Ascending aorta (tissue), 2 donors: ENCODE measurements at regions of chr6 and their contacts with region 1.

Region 1: DNA sequence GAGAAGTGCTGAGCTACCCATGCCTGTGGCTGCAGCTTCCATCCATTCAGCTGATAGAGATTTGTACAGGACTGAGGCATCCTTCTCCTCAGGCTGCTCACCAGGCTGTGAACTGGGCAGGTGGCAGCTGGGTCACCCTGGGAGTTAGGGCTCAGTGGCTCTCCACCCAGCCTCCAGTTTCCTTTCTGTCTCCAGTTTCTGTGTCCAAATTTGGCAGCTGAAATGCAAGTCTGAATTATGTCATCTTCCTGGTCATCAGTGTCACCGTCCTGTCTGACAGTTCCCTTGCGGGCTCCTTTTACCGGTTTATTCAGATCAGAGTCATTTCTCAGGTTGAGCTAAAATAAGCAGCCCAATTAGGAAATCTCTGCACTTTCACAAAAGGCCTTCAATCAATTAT is 93.3 kb downstream of the EDN1 start:
- DNase-seq: no peak
- H3K4me3 ChIP-seq: no peak overlapping the region
- H3K27ac ChIP-seq: peak overlapping the region; percentile 72 to 78
- H3K4me1 ChIP-seq: peaks cover 4 to 13% of the 10 kb centered on the region in 2 donors
- H3K27me3 ChIP-seq: no peaks in the 10 kb centered on the region
- CTCF ChIP-seq: no peak

Region 2: GRCh38 chr6:12354499-12354898 is 28.9 kb before region 1 on chr6:
- intact Hi-C with region 1: loop called (anchors 1 kb)
- DNase-seq: peak in 1 of 2 donors; percentile 86
- H3K4me3 ChIP-seq: no peak overlapping the region
- H3K27ac ChIP-seq: peak overlapping the region; percentile 74 to 82
- H3K4me1 ChIP-seq: peaks cover 13 to 37% of the 10 kb centered on the region in 2 donors
- H3K27me3 ChIP-seq: no peaks in the 10 kb centered on the region
- CTCF ChIP-seq: no peak

Region 3: DNA sequence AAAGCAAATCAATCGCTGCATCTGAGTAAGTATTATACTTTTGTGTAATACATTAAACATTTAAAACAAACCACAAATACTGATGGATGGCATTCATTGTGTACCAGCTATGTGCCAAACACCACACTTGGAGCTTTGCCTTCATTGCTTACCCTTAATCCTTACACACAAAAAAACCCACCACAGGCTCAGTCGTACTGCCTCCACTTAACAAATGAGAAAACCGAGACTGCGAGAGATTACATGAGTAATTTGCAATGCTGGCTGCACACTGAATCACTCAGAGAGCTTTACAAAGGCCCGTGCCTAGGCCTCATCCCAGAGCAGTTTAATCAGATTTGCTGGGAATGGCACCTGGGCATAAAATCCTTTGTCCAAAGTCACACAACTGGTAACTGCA is 37.2 kb after region 1 on chr6:
- intact Hi-C with region 1: loop called (anchors 5 kb)
- DNase-seq: no peak
- H3K4me3 ChIP-seq: no peak overlapping the region
- H3K27ac ChIP-seq: no peak overlapping the region
- H3K4me1 ChIP-seq: peaks cover 0 to 14% of the 10 kb centered on the region in 2 donors
- H3K27me3 ChIP-seq: no peaks in the 10 kb centered on the region
- CTCF ChIP-seq: no peak

Region 4: GRCh38 chr6:12516070-12516469 is 132.6 kb after region 1 on chr6:
- intact Hi-C with region 1: no loop called
- DNase-seq: no peak
- H3K4me3 ChIP-seq: no peak overlapping the region
- H3K27ac ChIP-seq: no peak overlapping the region
- H3K4me1 ChIP-seq: no peaks in the 10 kb centered on the region
- H3K27me3 ChIP-seq: no peaks in the 10 kb centered on the region
- CTCF ChIP-seq: no peak

Region 5: DNA sequence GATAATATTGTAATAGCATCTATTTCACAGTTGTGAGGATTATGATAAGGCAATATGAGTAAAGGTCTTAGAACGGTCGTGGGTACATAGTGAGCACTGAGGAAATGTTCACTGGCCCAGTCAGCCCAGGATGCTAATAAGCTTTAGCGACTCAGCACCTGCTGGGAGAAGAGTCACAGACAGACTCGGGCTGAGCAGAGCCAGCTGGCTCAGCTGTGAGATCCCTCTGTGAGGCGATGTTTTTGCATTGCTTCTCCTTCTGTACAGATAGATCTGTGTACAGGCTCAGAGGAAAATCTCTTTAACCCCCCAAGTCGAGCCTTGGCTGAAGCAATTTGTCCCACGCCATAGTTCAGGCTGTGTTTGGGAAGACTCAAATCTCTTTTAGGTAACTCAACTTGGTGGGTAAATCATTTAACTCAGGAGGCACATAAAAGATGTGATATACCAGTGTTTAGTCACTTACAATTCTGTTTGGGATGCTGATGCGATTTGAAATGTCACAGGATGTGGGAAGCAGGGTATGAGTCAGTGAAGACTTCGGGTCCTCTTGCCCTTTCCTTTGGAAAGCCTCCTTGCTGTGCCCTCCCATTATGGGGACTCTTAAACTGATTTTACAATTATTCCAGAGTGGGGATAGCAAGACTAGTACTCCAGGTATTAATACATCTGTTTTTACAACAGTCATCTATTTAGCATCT is 386.3 kb after region 1 on chr6:
- intact Hi-C with region 1: no loop called
- DNase-seq: no peak
- H3K4me3 ChIP-seq: no peak overlapping the region
- H3K27ac ChIP-seq: no peak overlapping the region
- H3K4me1 ChIP-seq: no peaks in the 10 kb centered on the region
- H3K27me3 ChIP-seq: no peaks in the 10 kb centered on the region
- CTCF ChIP-seq: no peak

Region 6: GRCh38 chr6:12947151-12947871 is 563.9 kb after region 1 on chr6:
- intact Hi-C with region 1: no loop called
- DNase-seq: no peak
- H3K4me3 ChIP-seq: no peak overlapping the region
- H3K27ac ChIP-seq: no peak overlapping the region
- H3K4me1 ChIP-seq: no peaks in the 10 kb centered on the region
- H3K27me3 ChIP-seq: no peaks in the 10 kb centered on the region
- CTCF ChIP-seq: no peak